ENCODE measurements at regions of chr4 and their contacts with region 1.

Region 1: DNA sequence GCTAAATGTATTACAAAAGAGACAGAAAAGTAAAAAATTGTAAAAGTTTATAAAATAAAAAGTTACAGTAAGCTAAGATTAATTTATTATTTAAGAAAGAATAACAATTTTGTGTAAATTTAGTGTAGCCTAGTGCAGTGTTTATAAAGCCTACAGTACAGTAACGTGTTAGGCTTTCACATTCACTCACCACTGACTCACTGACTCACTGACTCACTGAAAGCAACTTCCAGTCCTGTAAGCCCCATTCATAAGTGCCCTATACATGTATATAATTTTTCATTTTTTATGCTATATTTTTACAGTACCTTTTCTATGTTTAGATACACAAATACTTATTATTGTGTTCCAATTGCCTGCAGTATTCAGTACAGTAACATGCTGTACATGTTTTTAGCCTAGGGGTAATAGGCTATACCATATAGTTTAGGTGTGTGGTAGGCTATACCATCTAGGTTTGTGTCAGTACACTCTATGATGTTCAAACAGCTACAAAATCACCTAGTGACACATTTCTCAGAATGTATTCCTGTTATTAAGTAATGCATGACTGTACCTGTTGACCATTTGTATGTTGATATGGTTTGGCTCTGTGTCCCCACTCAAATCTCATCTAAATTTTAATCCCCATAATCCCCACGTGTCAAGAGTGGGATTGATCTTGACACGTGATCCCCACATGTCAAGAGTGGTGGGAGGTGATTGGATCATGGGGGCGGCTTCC is 57.9 kb downstream of the CFAP299 start:
- DNase-seq: no peak
- ATAC-seq: no peak; the same call in 1 of the 2 replicates
- H3K4me3 ChIP-seq: no peak overlapping the region
- H3K27ac ChIP-seq: no peak overlapping the region
- H3K4me1 ChIP-seq: no peaks in the 10 kb centered on the region
- H3K27me3 ChIP-seq: no peaks in the 10 kb centered on the region
- CTCF ChIP-seq: no peak

Region 2: DNA sequence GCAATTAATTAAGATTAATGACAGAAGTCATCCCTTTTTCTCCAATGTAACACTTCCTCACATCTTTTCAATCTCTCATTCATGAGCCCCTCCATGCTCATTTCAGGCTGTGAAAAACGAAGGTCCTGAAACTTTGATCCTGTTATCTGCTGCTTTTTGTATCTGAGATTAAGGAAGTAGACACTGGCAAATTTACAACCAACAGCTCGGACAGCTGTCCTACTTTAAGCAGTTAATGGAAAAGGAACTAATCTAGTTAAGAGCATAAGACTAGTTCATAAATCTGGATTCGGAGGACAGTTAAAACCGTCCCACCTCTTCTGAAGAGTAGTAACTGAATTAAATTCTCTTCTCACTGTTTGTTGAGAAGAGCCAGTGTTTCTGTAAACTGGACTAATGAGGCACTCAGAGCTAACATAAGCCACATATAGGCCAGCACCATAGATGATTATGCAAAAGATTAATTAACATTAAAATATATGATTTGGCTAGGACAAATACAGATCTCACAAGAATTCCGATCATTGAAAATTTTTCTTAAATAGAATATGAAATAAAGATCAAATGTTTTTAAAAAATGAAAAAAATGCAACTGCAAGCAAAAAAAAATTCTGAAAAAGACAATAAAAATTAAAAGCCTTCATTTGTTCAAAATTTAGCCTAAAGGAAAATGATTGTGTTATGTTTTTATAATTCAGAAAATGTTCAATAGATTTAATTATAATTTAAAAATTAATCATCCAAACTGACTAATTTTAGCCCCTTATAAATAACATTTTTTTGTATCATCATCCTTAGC is 434.7 kb before region 1 on chr4:
- CTCF ChIA-PET with region 1: no interaction called
- POLR2A ChIA-PET with region 1: no interaction called
- in situ Hi-C with region 1: no loop called
- intact Hi-C with region 1: loop called (anchors 10 kb)
- DNase-seq: no peak
- ATAC-seq: no peak
- H3K4me3 ChIP-seq: no peak overlapping the region
- H3K27ac ChIP-seq: no peak overlapping the region
- H3K4me1 ChIP-seq: no peaks in the 10 kb centered on the region
- H3K27me3 ChIP-seq: no peaks in the 10 kb centered on the region
- CTCF ChIP-seq: no peak

Region 3: GRCh38 chr4:80407246-80407645 is 13.8 kb after region 1 on chr4:
- CTCF ChIA-PET with region 1: no interaction called
- POLR2A ChIA-PET with region 1: no interaction called
- in situ Hi-C with region 1: no loop called
- intact Hi-C with region 1: no loop called
- DNase-seq: no peak
- ATAC-seq: no peak
- H3K4me3 ChIP-seq: no peak overlapping the region
- H3K27ac ChIP-seq: no peak overlapping the region
- H3K4me1 ChIP-seq: no peaks in the 10 kb centered on the region
- H3K27me3 ChIP-seq: no peaks in the 10 kb centered on the region
- CTCF ChIP-seq: no peak

Region 4: GRCh38 chr4:80422727-80423404 is 29.5 kb after region 1 on chr4:
- CTCF ChIA-PET with region 1: no interaction called
- POLR2A ChIA-PET with region 1: no interaction called
- in situ Hi-C with region 1: no loop called
- intact Hi-C with region 1: loop called (anchors 2 kb)
- DNase-seq: no peak
- ATAC-seq: no peak
- H3K4me3 ChIP-seq: no peak overlapping the region
- H3K27ac ChIP-seq: no peak overlapping the region
- H3K4me1 ChIP-seq: no peaks in the 10 kb centered on the region
- H3K27me3 ChIP-seq: no peaks in the 10 kb centered on the region
- CTCF ChIP-seq: no peak

Measured in Panc1 (cell line).